Mammary epithelial cell (primary cell): ENCODE measurements at regions of chr6 and their contacts with region 1.

Region 1: DNA sequence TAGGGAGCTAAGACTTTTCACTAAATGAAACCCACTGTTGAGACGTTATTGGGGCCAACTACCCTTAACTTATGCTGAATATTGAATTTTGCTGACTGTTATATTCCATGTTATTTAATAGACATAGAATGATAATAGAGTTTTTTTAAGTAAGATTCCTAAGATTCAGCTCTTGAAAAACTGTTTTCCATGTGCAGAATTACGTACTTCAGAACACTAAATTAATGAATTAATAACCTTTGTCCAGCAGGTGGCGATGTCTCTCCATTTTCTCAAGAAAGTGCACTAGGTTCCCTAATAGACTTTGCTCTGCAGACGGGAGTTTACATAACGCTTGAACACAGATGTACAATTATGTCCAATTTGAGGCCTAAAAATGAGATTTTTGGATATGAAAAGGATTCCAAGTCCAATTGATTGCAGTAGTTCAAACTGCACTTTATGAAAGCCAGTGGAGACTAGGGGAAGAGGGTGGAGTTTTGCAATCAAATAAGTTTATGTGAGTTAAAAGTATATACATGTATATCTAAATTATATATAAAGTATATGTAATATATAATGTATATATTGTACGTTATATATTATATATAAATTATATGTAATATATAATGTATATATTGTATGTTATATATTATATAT is 282.1 kb downstream of the UST start:
- DNase-seq: peak; percentile 61
- H3K4me3 ChIP-seq: no peak overlapping the region
- H3K27ac ChIP-seq: no peak overlapping the region
- H3K4me1 ChIP-seq: peaks cover 9% of the 10 kb centered on the region
- H3K27me3 ChIP-seq: no peaks in the 10 kb centered on the region
- CTCF ChIP-seq: peak; percentile 52 to 69

Region 2: DNA sequence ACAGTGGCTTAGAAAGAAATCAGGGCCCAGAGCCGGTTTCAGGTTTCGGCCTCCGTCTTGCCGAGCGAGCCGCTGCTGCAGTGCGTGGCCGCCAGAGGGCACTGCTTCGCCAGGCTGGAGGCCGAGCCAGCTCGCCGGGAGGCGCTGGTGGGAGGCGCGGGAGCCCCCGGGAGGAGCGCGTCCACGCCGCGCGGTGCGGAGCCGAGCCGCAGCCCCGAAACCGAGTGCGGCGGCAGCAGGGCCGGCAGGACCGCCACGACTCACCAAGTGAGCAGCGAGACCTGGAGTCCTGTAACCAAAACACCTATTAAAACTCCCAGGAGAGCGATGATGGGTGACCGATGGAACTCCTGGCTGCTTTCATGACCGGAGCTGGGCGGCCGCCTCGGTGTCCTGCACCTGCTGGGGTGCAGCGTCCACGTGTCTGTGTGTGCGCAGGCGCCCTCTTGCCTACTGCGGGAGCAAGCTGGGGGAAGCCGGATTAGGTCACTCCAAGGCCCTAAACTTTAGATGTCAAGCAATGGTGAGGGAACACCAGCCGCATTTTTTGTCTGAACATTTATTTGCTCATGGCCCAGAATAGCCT is 468.9 kb before region 1 on chr6:
- CTCF ChIA-PET with region 1: no interaction called
- dilution Hi-C with region 1: no loop called
- in situ Hi-C with region 1: no loop called
- intact Hi-C with region 1: loop called (anchors 1 kb)
- DNase-seq: peak; percentile 35
- H3K4me3 ChIP-seq: peak overlapping the region in 2 of 3 experiments; percentile 38 to 45
- H3K27ac ChIP-seq: no peak overlapping the region
- H3K4me1 ChIP-seq: peaks cover 5% of the 10 kb centered on the region
- H3K27me3 ChIP-seq: no peaks in the 10 kb centered on the region
- CTCF ChIP-seq: peak; percentile 86 to 89

Region 3: GRCh38 chr6:148947621-148948444 is 81.1 kb before region 1 on chr6:
- CTCF ChIA-PET with region 1: no interaction called
- dilution Hi-C with region 1: no loop called
- in situ Hi-C with region 1: no loop called
- intact Hi-C with region 1: loop called (anchors 5 kb)
- DNase-seq: peak; percentile 62
- H3K4me3 ChIP-seq: no peak overlapping the region
- H3K27ac ChIP-seq: no peak overlapping the region
- H3K4me1 ChIP-seq: peaks cover 9% of the 10 kb centered on the region
- H3K27me3 ChIP-seq: no peaks in the 10 kb centered on the region
- CTCF ChIP-seq: peak; percentile 86 to 88

Region 4: GRCh38 chr6:149082286-149082707 is 53.4 kb after region 1 on chr6:
- CTCF ChIA-PET with region 1: interaction called, 3 read pairs
- dilution Hi-C with region 1: no loop called
- in situ Hi-C with region 1: no loop called
- intact Hi-C with region 1: loop called (anchors 1 kb)
- DNase-seq: peak; percentile 52
- H3K4me3 ChIP-seq: no peak overlapping the region
- H3K27ac ChIP-seq: no peak overlapping the region
- H3K4me1 ChIP-seq: peaks cover 15% of the 10 kb centered on the region
- H3K27me3 ChIP-seq: no peaks in the 10 kb centered on the region
- CTCF ChIP-seq: peak; percentile 79 to 81

Region 5: GRCh38 chr6:149316798-149317655 is 288.1 kb after region 1 on chr6:
- CTCF ChIA-PET with region 1: no interaction called
- dilution Hi-C with region 1: no loop called
- in situ Hi-C with region 1: no loop called
- intact Hi-C with region 1: loop called (anchors 5 kb)
- DNase-seq: peak; percentile 91
- H3K4me3 ChIP-seq: peak overlapping the region; percentile 95 to 98 (median 96)
- H3K27ac ChIP-seq: peak overlapping the region; percentile 74
- H3K4me1 ChIP-seq: peaks cover 6% of the 10 kb centered on the region
- H3K27me3 ChIP-seq: no peaks in the 10 kb centered on the region
- CTCF ChIP-seq: no peak

Region 6: GRCh38 chr6:149513915-149514314 is 485.0 kb after region 1 on chr6:
- CTCF ChIA-PET with region 1: interaction called, 4 read pairs
- dilution Hi-C with region 1: no loop called
- in situ Hi-C with region 1: no loop called
- intact Hi-C with region 1: loop called (anchors 5 kb)
- DNase-seq: no peak
- H3K4me3 ChIP-seq: no peak overlapping the region
- H3K27ac ChIP-seq: no peak overlapping the region
- H3K4me1 ChIP-seq: no peaks in the 10 kb centered on the region
- H3K27me3 ChIP-seq: no peaks in the 10 kb centered on the region
- CTCF ChIP-seq: no peak